OCI-LY7 (cell line): ENCODE measurements at regions of chr7 and their contacts with region 1.

Region 1: GRCh38 chr7:141975806-141976523 is 2.4 kb upstream of the TAS2R38 start:
- DNase-seq: peak; percentile 71
- H3K4me3 ChIP-seq: peak overlapping the region; percentile 54
- H3K27ac ChIP-seq: peak overlapping the region; percentile 62
- H3K4me1 ChIP-seq: peaks cover 17% of the 10 kb centered on the region
- CTCF ChIP-seq: peak; percentile 99

Region 2: GRCh38 chr7:142017451-142017850 is 41.5 kb after region 1 on chr7:
- CTCF ChIA-PET with region 1: no interaction called
- POLR2A ChIA-PET with region 1: no interaction called
- intact Hi-C with region 1: no loop called
- DNase-seq: no peak
- H3K4me3 ChIP-seq: no peak overlapping the region
- H3K27ac ChIP-seq: no peak overlapping the region
- H3K4me1 ChIP-seq: no peaks in the 10 kb centered on the region
- CTCF ChIP-seq: no peak

Region 3: GRCh38 chr7:142030294-142030693 is 54.3 kb after region 1 on chr7:
- CTCF ChIA-PET with region 1: no interaction called
- POLR2A ChIA-PET with region 1: interaction called, 3 read pairs
- intact Hi-C with region 1: loop called (anchors 5 kb)
- DNase-seq: no peak
- H3K4me3 ChIP-seq: no peak overlapping the region
- H3K27ac ChIP-seq: no peak overlapping the region
- H3K4me1 ChIP-seq: no peaks in the 10 kb centered on the region
- CTCF ChIP-seq: peak; percentile 38

Region 4: GRCh38 chr7:142188846-142189245 is 212.9 kb after region 1 on chr7:
- CTCF ChIA-PET with region 1: no interaction called
- POLR2A ChIA-PET with region 1: no interaction called
- intact Hi-C with region 1: loop called (anchors 2 kb)
- DNase-seq: peak; percentile 5
- H3K4me3 ChIP-seq: no peak overlapping the region
- H3K27ac ChIP-seq: no peak overlapping the region
- H3K4me1 ChIP-seq: no peaks in the 10 kb centered on the region
- CTCF ChIP-seq: peak; percentile 65

Region 5: DNA sequence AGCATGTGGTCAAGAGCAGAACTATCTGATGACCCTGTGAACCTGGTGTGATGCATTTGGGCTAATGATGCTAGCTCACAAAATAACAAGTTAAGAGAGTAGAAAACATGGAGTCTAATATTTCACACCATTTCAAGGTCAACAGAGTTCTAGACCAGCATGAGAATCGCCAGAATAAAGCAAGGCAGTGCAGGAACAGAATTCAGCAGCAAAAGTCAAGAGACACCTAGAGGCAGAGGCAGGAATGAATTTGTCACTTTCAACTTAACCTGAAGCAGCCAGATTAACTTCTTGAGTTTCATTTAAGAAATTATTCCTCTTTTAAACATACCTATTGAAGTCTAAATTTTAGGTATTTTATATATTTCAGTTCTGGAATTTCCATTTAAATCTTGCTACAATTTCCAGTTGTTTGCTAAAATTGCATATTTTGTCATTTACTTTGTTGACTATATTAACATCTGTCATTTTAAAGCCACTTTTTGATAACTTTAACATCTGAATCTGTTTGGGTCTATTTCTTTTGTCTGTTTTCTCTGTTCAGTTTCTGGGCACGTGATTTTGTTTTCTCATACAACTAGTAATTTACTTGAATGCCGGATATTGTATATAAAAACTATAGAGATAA is 326.1 kb after region 1 on chr7:
- CTCF ChIA-PET with region 1: interaction called, 7 read pairs
- POLR2A ChIA-PET with region 1: no interaction called
- intact Hi-C with region 1: loop called (anchors 1 kb)
- DNase-seq: peak; percentile 68
- H3K4me3 ChIP-seq: no peak overlapping the region
- H3K27ac ChIP-seq: no peak overlapping the region
- H3K4me1 ChIP-seq: peaks cover 90% of the 10 kb centered on the region
- CTCF ChIP-seq: peak; percentile 90